Gastrocnemius medialis (tissue), 4 donors: ENCODE measurements at regions of chr3 and their contacts with region 1.

Region 1: GRCh38 chr3:194486540-194487288 is at the start of gene ATP13A3:
- DNase-seq: peak; percentile 79 to 84
- ATAC-seq: peak; percentile 90 to 93
- H3K4me3 ChIP-seq: peak within 1 kb of the TSS; percentile 61 to 73 (median 66)
- H3K27ac ChIP-seq: peak within 1 kb of the TSS; percentile 77 to 87 (median 85)
- H3K4me1 ChIP-seq: peaks cover 14 to 16% of the 10 kb centered on the region in 2 donors
- H3K27me3 ChIP-seq: no peaks in the 10 kb centered on the region
- CTCF ChIP-seq: no peak
- POLR2A ChIP-seq: peak; percentile 86 to 89
- total RNA-seq, gene ATP13A3: 31.8 to 90.2 (median 57.3) TPM

Region 2: GRCh38 chr3:194265483-194265892 is 221.2 kb before region 1 on chr3:
- in situ Hi-C with region 1: no loop called
- intact Hi-C with region 1: loop called (anchors 10 kb)
- DNase-seq: peak; percentile 93 to 96
- ATAC-seq: peak; percentile 96 to 97
- H3K4me3 ChIP-seq: no peak overlapping the region
- H3K27ac ChIP-seq: peak overlapping the region; percentile 61 to 71 (median 68)
- H3K4me1 ChIP-seq: peaks cover 23 to 36% of the 10 kb centered on the region in 2 donors
- H3K27me3 ChIP-seq: no peaks in the 10 kb centered on the region
- CTCF ChIP-seq: no peak
- POLR2A ChIP-seq: no peak

Region 3: GRCh38 chr3:194583604-194584318 is 97.0 kb after region 1 on chr3:
- in situ Hi-C with region 1: loop called in 2 of 4 experiments (anchors 5 kb)
- intact Hi-C with region 1: loop called (anchors 2 kb)
- DNase-seq: peak; percentile 84 to 90
- ATAC-seq: peak; percentile 96 to 97
- H3K4me3 ChIP-seq: peak overlapping the region; percentile 64 to 79 (median 71)
- H3K27ac ChIP-seq: peak overlapping the region; percentile 77 to 89 (median 82)
- H3K4me1 ChIP-seq: peaks cover 0 to 10% of the 10 kb centered on the region in 2 donors
- H3K27me3 ChIP-seq: no peaks in the 10 kb centered on the region
- CTCF ChIP-seq: no peak
- POLR2A ChIP-seq: peak; percentile 84 to 90

Region 4: GRCh38 chr3:194671900-194672808 is 185.4 kb after region 1 on chr3 and contains the start of gene LSG1:
- in situ Hi-C with region 1: no loop called
- intact Hi-C with region 1: loop called (anchors 5 kb)
- DNase-seq: peak; percentile 84 to 88
- ATAC-seq: peak; percentile 98
- H3K4me3 ChIP-seq: peak within 1 kb of the TSS; percentile 66 to 95 (median 87)
- H3K27ac ChIP-seq: peak within 1 kb of the TSS; percentile 83 to 91 (median 88)
- H3K4me1 ChIP-seq: peaks cover 32 to 33% of the 10 kb centered on the region in 2 donors
- H3K27me3 ChIP-seq: no peaks in the 10 kb centered on the region
- CTCF ChIP-seq: no peak
- POLR2A ChIP-seq: peak; percentile 49 to 64
- total RNA-seq, gene LSG1: 23.2 to 38.4 (median 28.0) TPM

Region 5: GRCh38 chr3:195442573-195443390 is 956.1 kb after region 1 on chr3 and contains the start of gene ACAP2:
- in situ Hi-C with region 1: no loop called
- intact Hi-C with region 1: loop called (anchors 2 kb)
- DNase-seq: peak; percentile 100
- ATAC-seq: peak; percentile 91 to 93
- H3K4me3 ChIP-seq: peak within 1 kb of the TSS; percentile 71 to 95 (median 91)
- H3K27ac ChIP-seq: peak within 1 kb of the TSS; percentile 93 to 98 (median 94)
- H3K4me1 ChIP-seq: peaks cover 16 to 25% of the 10 kb centered on the region in 2 donors
- H3K27me3 ChIP-seq: no peaks in the 10 kb centered on the region
- CTCF ChIP-seq: no peak
- POLR2A ChIP-seq: peak; percentile 96 to 97
- total RNA-seq, gene ACAP2: 13.2 to 27.6 (median 15.5) TPM